K562 (cell line): ENCODE measurements at regions of chr10 and their contacts with region 1.

Region 1: GRCh38 chr10:96089670-96090462 is 40.2 kb upstream of the ZNF518A start:
- DNase-seq: peak; percentile 84 to 96 (median 88)
- ATAC-seq: peak; percentile 98
- H3K4me3 ChIP-seq: peak overlapping the region; percentile 55
- H3K27ac ChIP-seq: peak overlapping the region; percentile 96
- H3K4me1 ChIP-seq: peaks cover 0 to 21% of the 10 kb centered on the region in 2 experiments; a peak in 4 of 5 replicates
- H3K27me3 ChIP-seq: no peaks in the 10 kb centered on the region
- CTCF ChIP-seq: peak in 2 of 3 experiments; percentile 13 to 29; a peak in 2 of 6 replicates
- EP300 ChIP-seq: no peak; the same call in 1 of the 2 replicates
- POLR2A ChIP-seq: peak; percentile 94
- RAD21 ChIP-seq: peak in 1 of 2 experiments; percentile 36; a peak in 2 of 4 replicates

Region 2: DNA sequence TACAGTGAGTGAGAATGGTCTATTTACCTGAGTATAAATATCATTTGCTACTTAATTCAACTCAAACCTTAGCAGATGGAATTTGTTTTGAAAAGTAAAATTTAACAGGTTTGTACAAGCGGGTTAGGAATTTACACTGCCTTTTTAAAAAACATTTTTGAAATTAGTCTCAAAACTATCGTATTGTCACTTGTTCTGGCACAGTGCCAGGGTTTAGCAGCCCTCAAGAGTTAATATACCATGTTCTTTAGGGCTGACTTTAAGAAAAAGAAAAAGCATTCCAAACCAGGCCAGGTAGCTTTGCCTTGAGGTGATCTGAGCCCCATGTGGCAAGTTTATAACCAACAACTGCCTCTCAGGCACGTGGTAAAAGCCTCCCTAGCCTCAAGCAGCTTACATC is 28.6 kb before region 1 on chr10:
- CTCF ChIA-PET with region 1: no interaction called
- POLR2A ChIA-PET with region 1: interaction called, 10 read pairs
- in situ Hi-C with region 1: no loop called
- intact Hi-C with region 1: no loop called
- DNase-seq: no peak
- ATAC-seq: no peak
- H3K4me3 ChIP-seq: no peak overlapping the region
- H3K27ac ChIP-seq: no peak overlapping the region
- H3K4me1 ChIP-seq: peaks cover 0 to 14% of the 10 kb centered on the region in 2 experiments; a peak in 3 of 5 replicates
- H3K27me3 ChIP-seq: no peaks in the 10 kb centered on the region
- CTCF ChIP-seq: no peak
- EP300 ChIP-seq: no peak
- POLR2A ChIP-seq: no peak
- RAD21 ChIP-seq: no peak

Region 3: DNA sequence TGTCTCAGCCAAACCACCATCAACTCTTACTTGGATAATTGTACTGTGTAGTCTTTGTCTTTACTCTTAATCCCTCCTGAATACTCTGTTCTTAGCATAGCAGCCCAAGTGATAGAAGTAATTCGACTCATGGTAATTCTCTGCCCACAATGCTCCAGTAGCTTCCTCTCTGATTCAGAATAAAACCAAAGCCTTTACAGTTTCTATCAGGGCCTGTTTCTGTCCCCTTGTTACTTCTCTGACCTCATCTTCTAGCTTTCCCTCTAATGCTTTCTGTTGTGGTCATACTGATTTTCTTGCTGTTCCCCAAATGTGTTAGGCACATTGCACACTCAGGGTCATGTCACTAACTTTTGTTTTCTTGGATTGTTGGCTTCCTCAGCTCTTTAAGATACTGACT is 48.2 kb after region 1 on chr10:
- CTCF ChIA-PET with region 1: no interaction called
- POLR2A ChIA-PET with region 1: no interaction called
- in situ Hi-C with region 1: no loop called
- intact Hi-C with region 1: no loop called
- DNase-seq: no peak
- ATAC-seq: no peak
- H3K4me3 ChIP-seq: no peak overlapping the region
- H3K27ac ChIP-seq: no peak overlapping the region
- H3K4me1 ChIP-seq: no peaks in the 10 kb centered on the region
- H3K27me3 ChIP-seq: no peaks in the 10 kb centered on the region
- CTCF ChIP-seq: no peak
- EP300 ChIP-seq: no peak
- POLR2A ChIP-seq: no peak
- RAD21 ChIP-seq: no peak